CD8-positive, alpha-beta T cell (primary cell): ENCODE measurements at regions of chr17 and their contacts with region 1.

Region 1: DNA sequence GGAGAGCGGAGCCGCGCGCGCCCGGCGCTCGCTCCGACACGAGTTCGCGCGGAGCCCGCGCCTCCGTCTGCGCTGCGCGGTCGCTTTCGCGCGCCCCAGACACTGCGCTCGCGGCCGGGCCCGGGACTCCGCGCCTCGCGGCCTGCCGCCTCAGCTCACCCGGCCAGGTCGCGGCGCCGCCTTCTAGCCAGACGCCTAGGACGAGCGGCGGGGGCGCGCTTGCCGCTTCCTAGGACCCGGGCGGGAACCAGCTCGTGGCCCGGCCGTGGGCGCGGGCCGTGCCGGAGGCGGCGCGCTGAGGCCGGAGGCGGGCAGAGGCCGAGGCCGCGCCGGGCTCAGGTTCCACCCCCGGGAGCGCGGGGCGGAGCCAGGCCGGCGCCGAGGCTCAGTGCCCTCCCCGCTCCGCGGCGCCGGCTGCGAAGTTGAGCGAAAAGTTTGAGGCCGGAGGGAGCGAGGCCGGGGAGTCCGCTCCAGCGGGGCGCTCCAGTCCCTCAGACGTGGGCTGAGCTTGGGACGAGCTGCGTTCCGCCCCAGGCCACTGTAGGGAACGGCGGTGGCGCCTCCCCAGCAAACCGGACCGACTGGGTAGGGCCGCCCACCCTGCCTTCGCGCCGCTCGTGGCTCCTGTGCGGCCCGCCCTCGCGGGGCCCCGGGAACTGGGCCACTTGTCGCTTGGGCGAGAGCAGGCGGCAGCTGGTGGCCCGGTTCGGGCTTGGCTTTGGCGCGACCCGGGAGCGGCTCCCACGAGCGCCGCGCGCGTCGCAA is at the start of gene SPHK1:
- DNase-seq: peak in 8 of 9 experiments; percentile 25 to 81 (median 57)
- ATAC-seq: peak; percentile 39
- H3K4me3 ChIP-seq: peak within 1 kb of the TSS; percentile 49 to 69
- H3K4me3 Mint-ChIP-seq: peak within 1 kb of the TSS; percentile 88
- H3K27ac ChIP-seq: peak within 1 kb of the TSS; percentile 8 to 42
- H3K27ac Mint-ChIP-seq: peak within 1 kb of the TSS; percentile 64
- H3K4me1 ChIP-seq: peaks cover 32% of the 10 kb centered on the region
- H3K4me1 Mint-ChIP-seq: peaks cover 13% of the 10 kb centered on the region
- H3K27me3 ChIP-seq: no peaks in the 10 kb centered on the region
- H3K27me3 Mint-ChIP-seq: peaks cover 2% of the 10 kb centered on the region
- CTCF ChIP-seq: no peak
- total RNA-seq, gene SPHK1: 2.0 to 2.6 TPM

Region 2: DNA sequence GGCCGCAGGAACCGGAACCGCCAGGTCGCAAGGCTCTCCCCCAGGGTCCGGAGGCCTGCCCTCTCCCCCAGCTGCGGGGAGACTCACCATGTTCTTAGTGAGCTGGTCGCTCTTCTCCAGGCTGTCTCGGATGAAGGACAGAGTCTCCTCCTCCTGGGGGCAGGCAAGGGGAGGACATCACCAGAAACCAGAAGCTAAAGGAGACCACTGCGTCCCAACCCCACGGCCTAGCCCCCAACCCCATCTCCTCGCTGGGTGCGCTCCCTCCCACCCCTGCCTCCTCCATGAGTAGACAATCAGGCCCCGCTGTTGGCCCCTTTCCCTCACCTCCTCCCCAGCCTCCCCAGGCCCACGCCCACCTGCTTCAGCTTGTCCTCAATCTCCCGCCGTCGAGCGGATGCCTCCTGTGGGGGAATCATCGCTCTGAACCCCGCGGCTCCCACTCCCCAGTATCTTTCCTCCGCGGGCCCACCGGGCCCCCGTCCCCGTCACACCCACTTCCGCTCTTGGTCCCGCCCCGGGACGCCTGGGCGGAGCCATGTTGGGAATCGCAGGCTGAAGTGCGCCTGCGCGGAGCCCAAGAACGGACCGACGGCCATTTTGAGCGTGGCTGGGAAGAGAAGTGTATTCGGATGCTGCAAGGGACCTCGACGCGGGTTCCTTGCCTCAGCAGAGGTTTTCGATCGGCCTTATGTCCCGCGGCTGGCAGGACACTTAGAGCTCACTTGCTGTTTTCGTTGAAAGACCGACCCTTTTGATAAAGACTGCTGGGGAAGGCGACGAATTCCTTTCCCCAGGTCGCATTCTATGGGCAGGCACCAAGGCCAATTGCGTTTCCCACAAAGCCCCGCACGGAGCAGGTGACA is 280.9 kb before region 1 on chr17 and contains the start of gene EXOC7:
- CTCF ChIA-PET with region 1: interaction called, 3 read pairs
- POLR2A ChIA-PET with region 1: interaction called, 3 read pairs
- intact Hi-C with region 1: loop called in 1 of 2 experiments (anchors 10 kb)
- DNase-seq: peak; percentile 83 to 97 (median 93)
- ATAC-seq: peak; percentile 93
- H3K4me3 ChIP-seq: peak within 1 kb of the TSS; percentile 74 to 75
- H3K4me3 Mint-ChIP-seq: peak within 1 kb of the TSS; percentile 98
- H3K27ac ChIP-seq: peak within 1 kb of the TSS; percentile 61 to 77
- H3K27ac Mint-ChIP-seq: peak within 1 kb of the TSS; percentile 95
- H3K4me1 ChIP-seq: peaks cover 21% of the 10 kb centered on the region
- H3K4me1 Mint-ChIP-seq: peaks cover 29% of the 10 kb centered on the region
- H3K27me3 ChIP-seq: no peaks in the 10 kb centered on the region
- H3K27me3 Mint-ChIP-seq: no peaks in the 10 kb centered on the region
- CTCF ChIP-seq: no peak
- total RNA-seq, gene EXOC7: 97.3 to 101 TPM

Region 3: GRCh38 chr17:76307299-76307965 is 77.0 kb before region 1 on chr17:
- CTCF ChIA-PET with region 1: interaction called, 43 read pairs
- POLR2A ChIA-PET with region 1: no interaction called
- intact Hi-C with region 1: no loop called
- DNase-seq: no peak
- ATAC-seq: no peak
- H3K4me3 ChIP-seq: no peak overlapping the region
- H3K4me3 Mint-ChIP-seq: no peak overlapping the region
- H3K27ac ChIP-seq: no peak overlapping the region
- H3K27ac Mint-ChIP-seq: no peak overlapping the region
- H3K4me1 ChIP-seq: no peaks in the 10 kb centered on the region
- H3K4me1 Mint-ChIP-seq: peaks cover 1% of the 10 kb centered on the region
- H3K27me3 ChIP-seq: no peaks in the 10 kb centered on the region
- H3K27me3 Mint-ChIP-seq: no peaks in the 10 kb centered on the region
- CTCF ChIP-seq: no peak

Region 4: DNA sequence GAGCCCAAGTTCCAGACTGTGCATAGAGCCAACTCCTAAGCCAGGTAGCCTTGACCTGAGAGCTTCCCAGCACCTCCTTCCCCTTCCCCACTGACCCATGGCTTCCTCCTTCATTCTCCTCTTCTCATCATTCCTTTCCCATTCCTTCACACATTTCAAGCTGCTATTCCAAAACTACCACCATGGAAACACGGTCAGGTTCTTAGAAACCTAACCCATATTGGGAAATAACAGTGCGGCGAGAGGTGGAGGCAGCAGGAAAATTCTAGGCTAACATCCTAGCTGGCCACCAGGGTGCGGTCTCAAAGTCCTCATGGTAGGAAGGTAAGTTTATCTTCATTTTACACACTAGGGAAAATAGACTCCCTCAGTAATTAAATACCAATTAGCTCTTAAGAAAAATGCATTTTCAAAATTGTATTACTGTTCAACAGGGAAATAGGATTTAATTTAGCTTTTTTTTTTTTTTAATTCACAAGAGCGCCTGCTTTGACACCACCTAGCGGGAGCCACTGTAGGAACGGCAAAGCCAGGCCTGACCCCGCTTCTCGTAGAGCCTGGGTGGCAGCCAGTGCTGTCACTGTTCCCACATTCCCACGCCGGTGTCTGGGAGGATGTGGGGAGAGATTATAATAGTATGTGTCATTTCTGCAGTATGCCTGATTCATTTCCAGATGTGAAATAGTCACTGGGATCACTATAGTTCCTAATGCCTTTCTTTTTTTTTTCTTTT is 14.0 kb before region 1 on chr17:
- CTCF ChIA-PET with region 1: interaction called, 26 read pairs
- POLR2A ChIA-PET with region 1: no interaction called
- intact Hi-C with region 1: no loop called
- DNase-seq: no peak
- ATAC-seq: no peak
- H3K4me3 ChIP-seq: no peak overlapping the region
- H3K4me3 Mint-ChIP-seq: no peak overlapping the region
- H3K27ac ChIP-seq: no peak overlapping the region
- H3K27ac Mint-ChIP-seq: no peak overlapping the region
- H3K4me1 ChIP-seq: no peaks in the 10 kb centered on the region
- H3K4me1 Mint-ChIP-seq: no peaks in the 10 kb centered on the region
- H3K27me3 ChIP-seq: no peaks in the 10 kb centered on the region
- H3K27me3 Mint-ChIP-seq: no peaks in the 10 kb centered on the region
- CTCF ChIP-seq: no peak